CD8-positive, alpha-beta memory T cell (primary cell): ENCODE measurements at regions of chr1 and their contacts with region 1.

Region 1: GRCh38 chr1:18575620-18576019 is 55.0 kb upstream of the PAX7 start:
- DNase-seq: peak in 3 of 5 donors; percentile 5 to 53 (median 14)
- H3K4me3 ChIP-seq: no peak overlapping the region
- H3K4me3 Mint-ChIP-seq: no peak overlapping the region
- H3K27ac ChIP-seq: no peak overlapping the region
- H3K27ac Mint-ChIP-seq: no peak overlapping the region
- H3K4me1 ChIP-seq: no peaks in the 10 kb centered on the region
- H3K4me1 Mint-ChIP-seq: no peaks in the 10 kb centered on the region
- H3K27me3 ChIP-seq: no peaks in the 10 kb centered on the region
- H3K27me3 Mint-ChIP-seq: peaks cover 11 to 17% of the 10 kb centered on the region in 2 donors

Region 2: DNA sequence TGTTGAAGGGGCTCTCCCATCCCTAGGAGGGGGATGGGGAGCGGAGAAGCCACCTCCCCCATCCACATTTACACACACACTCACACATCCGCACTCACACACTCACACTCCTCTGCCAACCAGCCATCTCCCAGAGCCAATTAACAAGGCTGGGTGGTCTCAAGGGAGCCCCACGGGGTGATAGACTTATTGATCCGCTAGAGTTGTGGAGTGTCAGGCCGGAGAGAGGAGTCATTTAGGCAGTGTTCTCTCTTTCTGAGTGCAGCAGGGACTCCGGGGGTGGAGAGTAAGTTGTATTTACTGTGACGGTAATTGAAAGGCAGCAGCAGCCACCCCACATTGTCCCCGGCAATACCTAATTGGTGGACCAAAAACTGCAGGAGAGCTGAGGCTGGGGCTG is 33.3 kb before region 1 on chr1:
- CTCF ChIA-PET with region 1: no interaction called
- POLR2A ChIA-PET with region 1: no interaction called
- DNase-seq: peak in 1 of 5 donors; percentile 4
- H3K4me3 ChIP-seq: no peak overlapping the region
- H3K4me3 Mint-ChIP-seq: no peak overlapping the region
- H3K27ac ChIP-seq: no peak overlapping the region
- H3K27ac Mint-ChIP-seq: no peak overlapping the region
- H3K4me1 ChIP-seq: no peaks in the 10 kb centered on the region
- H3K4me1 Mint-ChIP-seq: no peaks in the 10 kb centered on the region
- H3K27me3 ChIP-seq: no peaks in the 10 kb centered on the region
- H3K27me3 Mint-ChIP-seq: peaks cover 41 to 60% of the 10 kb centered on the region in 2 donors

Region 3: DNA sequence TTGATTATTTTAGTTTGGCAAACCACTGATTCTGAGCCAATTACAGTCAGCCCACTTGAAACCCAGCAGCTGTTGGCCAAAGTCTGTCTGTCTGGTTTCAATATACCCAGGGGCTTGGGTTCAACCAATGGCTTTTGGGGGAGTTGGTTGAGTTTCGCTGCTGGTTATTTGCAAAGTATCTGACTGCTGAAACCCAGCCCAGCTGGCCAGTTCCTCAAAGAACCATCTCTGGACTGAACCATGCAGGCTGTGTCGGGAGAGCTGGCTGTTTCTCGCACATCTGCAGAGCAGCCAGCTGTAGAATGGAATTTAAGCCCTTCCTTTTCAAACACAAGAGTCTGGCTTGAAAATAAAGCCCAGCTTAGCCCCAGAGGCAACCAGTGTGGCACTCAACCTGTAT is 10.9 kb before region 1 on chr1:
- CTCF ChIA-PET with region 1: interaction called, 10 read pairs
- POLR2A ChIA-PET with region 1: no interaction called
- DNase-seq: no peak
- H3K4me3 ChIP-seq: no peak overlapping the region
- H3K4me3 Mint-ChIP-seq: no peak overlapping the region
- H3K27ac ChIP-seq: no peak overlapping the region
- H3K27ac Mint-ChIP-seq: no peak overlapping the region
- H3K4me1 ChIP-seq: no peaks in the 10 kb centered on the region
- H3K4me1 Mint-ChIP-seq: no peaks in the 10 kb centered on the region
- H3K27me3 ChIP-seq: no peaks in the 10 kb centered on the region
- H3K27me3 Mint-ChIP-seq: peaks cover 8 to 51% of the 10 kb centered on the region in 2 donors